ENCODE measurements at regions of chrX and their contacts with region 1.

Region 1: DNA sequence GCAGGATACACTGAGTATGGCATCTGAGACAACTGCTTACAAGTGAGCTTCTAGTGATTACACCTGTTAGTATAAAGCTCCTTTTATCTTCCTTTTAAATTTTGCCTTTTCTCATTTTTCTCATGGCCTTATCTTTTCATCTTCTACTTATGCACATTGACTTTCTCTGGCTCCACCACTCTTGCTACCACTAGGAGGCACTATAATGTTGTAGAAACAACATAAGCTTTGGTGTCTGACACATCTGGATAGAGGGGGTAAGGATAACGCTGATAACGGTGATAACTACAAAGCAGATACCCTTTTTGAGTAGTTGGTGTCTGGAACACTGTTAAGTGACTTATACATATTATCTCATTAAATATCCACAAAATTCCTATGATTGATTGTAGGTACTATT is 187.4 kb upstream of the TEX13C start:
- DNase-seq: peak; percentile 1
- H3K4me3 ChIP-seq: no peak overlapping the region
- H3K27ac ChIP-seq: no peak overlapping the region
- H3K4me1 ChIP-seq: no peaks in the 10 kb centered on the region
- H3K27me3 ChIP-seq: no peaks in the 10 kb centered on the region
- CTCF ChIP-seq: peak; percentile 55

Region 2: DNA sequence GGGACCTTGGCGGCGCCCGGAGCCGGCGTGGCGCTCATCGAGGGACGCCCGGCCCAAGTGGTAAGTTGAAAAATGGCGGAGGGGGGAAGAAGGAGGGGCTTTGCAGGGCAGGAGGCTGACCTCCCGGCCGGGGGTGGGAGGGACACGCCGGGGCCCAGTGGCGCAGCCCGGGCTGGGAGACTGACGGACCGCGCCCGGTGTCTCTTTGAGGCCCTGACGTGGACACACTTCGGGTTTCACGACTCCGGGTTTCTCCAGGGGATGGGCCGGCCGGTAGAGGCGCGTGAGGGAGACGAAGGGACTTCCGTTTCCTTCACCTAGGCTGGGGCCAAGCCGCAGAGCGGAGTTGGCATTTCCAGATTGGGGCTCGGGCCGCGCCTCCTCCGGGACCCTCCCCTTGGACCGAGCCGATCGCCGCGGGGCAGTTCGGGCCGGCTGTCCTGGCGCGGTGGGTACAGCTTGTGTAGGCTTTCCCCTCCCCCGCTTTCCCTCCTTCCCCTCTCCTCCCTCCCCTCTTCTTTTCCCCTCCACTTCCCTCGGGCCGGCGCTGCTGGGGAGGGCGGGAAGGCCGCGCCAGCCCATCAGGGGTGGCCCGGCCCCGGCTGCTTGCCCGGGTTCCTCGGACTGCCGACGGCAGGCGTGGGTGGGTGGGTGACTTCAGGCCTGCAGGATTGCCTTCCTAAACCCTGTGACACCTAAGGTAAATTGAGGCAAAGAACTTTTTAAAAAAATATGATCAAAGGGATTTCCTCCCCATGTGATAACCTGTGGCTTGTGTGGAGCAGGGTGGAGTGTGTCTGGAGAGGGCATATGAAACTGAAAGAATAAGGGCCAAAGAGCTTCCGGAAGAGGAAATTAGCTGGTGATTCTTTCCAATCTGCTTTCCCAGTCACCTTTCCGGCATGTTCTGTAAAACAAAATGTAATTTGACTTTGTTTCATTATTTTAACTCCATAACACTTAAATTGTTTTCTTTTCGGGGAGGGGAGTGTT is 1272.1 kb before region 1 on chrX and contains the start of gene XIAP:
- CTCF ChIA-PET with region 1: no interaction called
- dilution Hi-C with region 1: no loop called
- in situ Hi-C with region 1: no loop called
- intact Hi-C with region 1: no loop called
- DNase-seq: peak; percentile 92
- H3K4me3 ChIP-seq: peak within 1 kb of the TSS; percentile 53 to 61 (median 61)
- H3K27ac ChIP-seq: peak within 1 kb of the TSS; percentile 78
- H3K4me1 ChIP-seq: peaks cover 3% of the 10 kb centered on the region
- H3K27me3 ChIP-seq: no peaks in the 10 kb centered on the region
- CTCF ChIP-seq: no peak
- total RNA-seq, gene XIAP: 23.3 to 43.4 TPM

Region 3: GRCh38 chrX:124098089-124098488 is 1034.2 kb before region 1 on chrX:
- CTCF ChIA-PET with region 1: no interaction called
- dilution Hi-C with region 1: no loop called
- in situ Hi-C with region 1: no loop called
- intact Hi-C with region 1: loop called (anchors 5 kb)
- DNase-seq: peak; percentile 8
- H3K4me3 ChIP-seq: no peak overlapping the region
- H3K27ac ChIP-seq: no peak overlapping the region
- H3K4me1 ChIP-seq: no peaks in the 10 kb centered on the region
- H3K27me3 ChIP-seq: no peaks in the 10 kb centered on the region
- CTCF ChIP-seq: peak; percentile 58

Region 4: GRCh38 chrX:124211312-124211942 is 920.9 kb before region 1 on chrX:
- CTCF ChIA-PET with region 1: no interaction called
- dilution Hi-C with region 1: no loop called
- in situ Hi-C with region 1: no loop called
- intact Hi-C with region 1: loop called (anchors 10 kb)
- DNase-seq: peak; percentile 44
- H3K4me3 ChIP-seq: no peak overlapping the region
- H3K27ac ChIP-seq: no peak overlapping the region
- H3K4me1 ChIP-seq: peaks cover 4% of the 10 kb centered on the region
- H3K27me3 ChIP-seq: no peaks in the 10 kb centered on the region
- CTCF ChIP-seq: peak; percentile 53 to 72

Region 5: GRCh38 chrX:124388562-124388961 is 743.7 kb before region 1 on chrX:
- CTCF ChIA-PET with region 1: no interaction called
- dilution Hi-C with region 1: no loop called
- in situ Hi-C with region 1: loop called in 1 of 2 experiments (anchors 10 kb)
- intact Hi-C with region 1: loop called (anchors 1 kb)
- DNase-seq: peak; percentile 31
- H3K4me3 ChIP-seq: no peak overlapping the region
- H3K27ac ChIP-seq: no peak overlapping the region
- H3K4me1 ChIP-seq: no peaks in the 10 kb centered on the region
- H3K27me3 ChIP-seq: no peaks in the 10 kb centered on the region
- CTCF ChIP-seq: peak; percentile 59 to 77

Region 6: DNA sequence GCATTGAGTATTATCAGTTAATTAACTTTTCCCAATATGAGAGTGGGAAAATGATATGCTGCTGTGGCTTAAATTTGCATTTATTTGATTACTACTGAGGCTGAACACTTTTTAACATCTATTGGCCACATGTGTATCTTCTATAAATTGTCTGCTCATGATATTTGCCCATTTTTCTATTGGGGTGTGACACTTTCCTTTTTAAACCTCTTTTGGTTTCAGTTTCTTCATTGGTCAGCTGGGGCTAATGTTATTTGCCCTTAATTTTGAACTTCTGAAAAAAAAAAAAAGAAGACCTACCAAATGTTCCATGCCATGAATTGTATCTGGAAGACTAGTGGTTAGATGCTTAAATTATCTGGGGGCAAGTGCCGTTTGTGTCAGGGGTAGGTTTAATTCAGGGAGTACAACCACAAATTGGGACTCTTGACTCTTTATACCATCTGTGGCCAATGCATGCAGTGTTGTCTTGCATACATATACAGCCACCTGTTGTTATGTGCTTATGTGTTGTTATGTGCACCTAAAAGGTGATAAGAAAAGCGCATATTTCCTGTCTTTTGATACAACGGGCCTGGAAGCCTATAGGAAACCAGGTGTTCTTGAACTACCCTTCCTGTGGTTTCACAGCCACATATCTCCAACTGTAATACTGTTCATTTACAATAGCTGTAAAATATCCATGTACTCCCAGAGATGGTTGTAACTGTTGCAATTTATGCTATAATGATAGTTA is 737.0 kb before region 1 on chrX:
- CTCF ChIA-PET with region 1: no interaction called
- dilution Hi-C with region 1: no loop called
- in situ Hi-C with region 1: loop called (anchors 10 to 25 kb)
- intact Hi-C with region 1: no loop called
- DNase-seq: no peak
- H3K4me3 ChIP-seq: no peak overlapping the region
- H3K27ac ChIP-seq: no peak overlapping the region
- H3K4me1 ChIP-seq: no peaks in the 10 kb centered on the region
- H3K27me3 ChIP-seq: no peaks in the 10 kb centered on the region
- CTCF ChIP-seq: no peak

Region 7: GRCh38 chrX:124406294-124407014 is 725.8 kb before region 1 on chrX:
- CTCF ChIA-PET with region 1: interaction called, 3 read pairs
- dilution Hi-C with region 1: no loop called
- in situ Hi-C with region 1: loop called in 1 of 2 experiments (anchors 25 kb)
- intact Hi-C with region 1: loop called (anchors 1 kb)
- DNase-seq: peak; percentile 81
- H3K4me3 ChIP-seq: no peak overlapping the region
- H3K27ac ChIP-seq: no peak overlapping the region
- H3K4me1 ChIP-seq: peaks cover 7% of the 10 kb centered on the region
- H3K27me3 ChIP-seq: no peaks in the 10 kb centered on the region
- CTCF ChIP-seq: peak; percentile 67 to 71